Transverse colon (tissue), 4 donors: ENCODE measurements at regions of chr6 and their contacts with region 1.

Region 1: GRCh38 chr6:13711733-13712598 is at the start of gene RANBP9:
- DNase-seq: peak; percentile 90
- H3K4me3 ChIP-seq: peak within 1 kb of the TSS; percentile 63 to 94 (median 84)
- H3K27ac ChIP-seq: peak within 1 kb of the TSS; percentile 96 to 98 (median 98)
- H3K4me1 ChIP-seq: peaks cover 21 to 38% (median 26%) of the 10 kb centered on the region in 4 donors
- H3K27me3 ChIP-seq: no peaks in the 10 kb centered on the region
- CTCF ChIP-seq: no peak
- EP300 ChIP-seq: peak; percentile 12
- POLR2A ChIP-seq: peak; percentile 67
- total RNA-seq, gene RANBP9: 17.9 to 40.8 (median 37.4) TPM

Region 2: GRCh38 chr6:13767121-13767808 is 55.3 kb after region 1 on chr6:
- in situ Hi-C with region 1: no loop called
- intact Hi-C with region 1: loop called (anchors 10 kb)
- DNase-seq: peak; percentile 53
- H3K4me3 ChIP-seq: peak overlapping the region in 2 of 4 donors; percentile 22 to 31
- H3K27ac ChIP-seq: peak overlapping the region in 3 of 4 donors; percentile 40 to 70 (median 67)
- H3K4me1 ChIP-seq: peaks cover 0 to 23% (median 13%) of the 10 kb centered on the region in 4 donors
- H3K27me3 ChIP-seq: no peaks in the 10 kb centered on the region
- CTCF ChIP-seq: peak in 1 of 5 experiments; percentile 11
- EP300 ChIP-seq: no peak
- POLR2A ChIP-seq: no peak